Activated CD4-positive, alpha-beta memory T cell treated with anti-CD3 and anti-CD28 coated beads for 36 hours (primary cell): ENCODE measurements at regions of chr9 and their contacts with region 1.

Region 1: GRCh38 chr9:5628530-5629311 is at the start of gene RIC1:
- DNase-seq: peak; percentile 94
- H3K4me3 Mint-ChIP-seq: peak within 1 kb of the TSS; percentile 98
- H3K27ac Mint-ChIP-seq: peak within 1 kb of the TSS; percentile 100
- H3K4me1 Mint-ChIP-seq: peaks cover 62% of the 10 kb centered on the region
- H3K27me3 Mint-ChIP-seq: no peaks in the 10 kb centered on the region
- total RNA-seq, gene RIC1: 14.1 to 15.0 TPM

Region 2: GRCh38 chr9:5336688-5337087 is 292.0 kb before region 1 on chr9:
- CTCF ChIA-PET with region 1: no interaction called
- POLR2A ChIA-PET with region 1: no interaction called
- intact Hi-C with region 1: no loop called
- DNase-seq: peak; percentile 41
- H3K4me3 Mint-ChIP-seq: peak overlapping the region; percentile 37
- H3K27ac Mint-ChIP-seq: peak overlapping the region; percentile 69
- H3K4me1 Mint-ChIP-seq: peaks cover 41% of the 10 kb centered on the region
- H3K27me3 Mint-ChIP-seq: no peaks in the 10 kb centered on the region

Region 3: DNA sequence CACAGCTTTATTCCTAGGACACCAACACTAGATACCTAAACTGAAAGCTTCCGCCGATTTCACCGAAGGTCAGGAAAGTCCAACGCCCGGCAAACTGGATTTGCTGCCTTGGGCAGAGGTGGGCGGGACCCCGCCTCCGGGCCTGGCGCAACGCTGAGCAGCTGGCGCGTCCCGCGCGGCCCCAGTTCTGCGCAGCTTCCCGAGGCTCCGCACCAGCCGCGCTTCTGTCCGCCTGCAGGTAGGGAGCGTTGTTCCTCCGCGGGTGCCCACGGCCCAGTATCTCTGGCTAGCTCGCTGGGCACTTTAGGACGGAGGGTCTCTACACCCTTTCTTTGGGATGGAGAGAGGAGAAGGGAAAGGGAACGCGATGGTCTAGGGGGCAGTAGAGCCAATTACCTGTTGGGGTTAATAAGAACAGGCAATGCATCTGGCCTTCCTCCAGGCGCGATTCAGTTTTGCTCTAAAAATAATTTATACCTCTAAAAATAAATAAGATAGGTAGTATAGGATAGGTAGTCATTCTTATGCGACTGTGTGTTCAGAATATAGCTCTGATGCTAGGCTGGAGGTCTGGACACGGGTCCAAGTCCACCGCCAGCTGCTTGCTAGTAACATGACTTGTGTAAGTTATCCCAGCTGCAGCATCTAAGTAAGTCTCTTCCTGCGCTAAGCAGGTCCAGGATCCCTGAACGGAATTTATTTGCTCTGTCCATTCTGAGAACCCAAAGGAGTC is 178.2 kb before region 1 on chr9 and contains the start of gene CD274:
- CTCF ChIA-PET with region 1: interaction called, 7 read pairs
- POLR2A ChIA-PET with region 1: interaction called, 11 read pairs
- intact Hi-C with region 1: loop called (anchors 2 kb)
- DNase-seq: peak; percentile 92
- H3K4me3 Mint-ChIP-seq: peak within 1 kb of the TSS; percentile 86
- H3K27ac Mint-ChIP-seq: peak within 1 kb of the TSS; percentile 90
- H3K4me1 Mint-ChIP-seq: peaks cover 59% of the 10 kb centered on the region
- H3K27me3 Mint-ChIP-seq: no peaks in the 10 kb centered on the region
- total RNA-seq, gene CD274: 28.3 to 32.4 TPM

Region 4: DNA sequence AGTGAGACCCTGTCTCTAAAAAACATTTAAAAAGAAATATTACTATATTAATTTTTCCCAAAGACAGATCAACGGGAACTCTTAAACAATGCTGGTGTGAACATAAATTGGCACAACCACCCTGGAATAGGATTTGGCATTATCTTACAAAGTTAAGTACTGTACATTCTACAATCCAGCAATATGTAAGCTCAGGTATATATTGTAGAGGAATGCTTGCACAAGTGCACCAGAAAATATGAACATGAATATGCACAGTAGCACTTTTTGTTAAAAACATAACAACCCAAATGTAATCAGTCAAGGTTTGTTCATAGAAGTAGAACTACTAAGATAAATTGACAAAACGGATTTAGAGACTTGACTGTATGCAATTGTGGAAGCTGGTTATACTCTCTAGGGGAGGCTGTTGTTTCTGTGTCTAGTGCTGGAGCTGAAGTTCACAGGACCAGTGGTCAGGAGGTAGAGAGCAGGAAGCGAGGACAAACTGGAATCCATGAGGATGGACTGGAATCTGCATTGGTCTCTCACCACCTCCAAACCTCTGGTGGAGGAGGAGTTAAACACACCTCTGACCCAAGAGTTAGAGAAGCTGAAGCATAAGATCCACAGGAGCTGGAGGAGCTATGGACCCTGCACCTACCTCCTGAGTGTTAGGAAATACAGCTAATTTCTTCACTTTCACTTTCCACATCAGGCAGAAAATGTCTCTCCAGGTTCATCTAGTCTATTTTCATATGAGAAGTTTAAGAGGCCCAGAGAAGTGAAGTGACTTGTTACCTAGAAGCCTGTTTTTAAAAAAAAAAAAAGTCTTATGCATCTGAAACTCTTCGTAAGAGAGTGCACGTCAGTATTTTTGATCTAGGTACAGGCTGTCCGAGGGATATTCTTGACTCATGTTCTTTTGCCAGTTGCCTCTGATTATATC is 20.2 kb before region 1 on chr9:
- CTCF ChIA-PET with region 1: interaction called, 4 read pairs
- POLR2A ChIA-PET with region 1: interaction called, 3 read pairs
- intact Hi-C with region 1: loop called (anchors 2 kb)
- DNase-seq: no peak
- H3K4me3 Mint-ChIP-seq: no peak overlapping the region
- H3K27ac Mint-ChIP-seq: no peak overlapping the region
- H3K4me1 Mint-ChIP-seq: peaks cover 14% of the 10 kb centered on the region
- H3K27me3 Mint-ChIP-seq: no peaks in the 10 kb centered on the region

Region 5: GRCh38 chr9:5714501-5715401 is 86.0 kb after region 1 on chr9:
- CTCF ChIA-PET with region 1: no interaction called
- POLR2A ChIA-PET with region 1: no interaction called
- intact Hi-C with region 1: loop called (anchors 1 kb)
- DNase-seq: no peak
- H3K4me3 Mint-ChIP-seq: no peak overlapping the region
- H3K27ac Mint-ChIP-seq: no peak overlapping the region
- H3K4me1 Mint-ChIP-seq: peaks cover 8% of the 10 kb centered on the region
- H3K27me3 Mint-ChIP-seq: no peaks in the 10 kb centered on the region

Region 6: DNA sequence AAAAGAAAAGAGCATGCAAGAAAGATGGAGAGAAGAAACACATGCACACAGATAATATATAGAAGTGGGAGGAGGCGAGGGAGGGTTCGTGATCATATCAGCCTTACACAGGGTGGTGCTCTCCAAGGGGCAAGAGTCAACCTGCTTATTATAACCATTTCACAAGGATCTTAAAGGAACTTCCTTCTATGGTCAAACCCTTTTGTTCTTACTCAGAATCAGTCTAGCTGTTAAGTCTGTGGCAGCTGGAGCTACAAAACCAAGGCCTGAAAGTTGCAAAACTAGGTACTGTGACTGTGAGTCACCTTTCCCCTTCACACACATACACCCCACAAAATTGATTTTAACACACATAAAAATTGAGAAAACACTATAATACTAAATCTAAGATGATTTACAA is 222.7 kb after region 1 on chr9:
- CTCF ChIA-PET with region 1: no interaction called
- POLR2A ChIA-PET with region 1: interaction called, 3 read pairs
- intact Hi-C with region 1: loop called (anchors 1 kb)
- DNase-seq: peak; percentile 66
- H3K4me3 Mint-ChIP-seq: no peak overlapping the region
- H3K27ac Mint-ChIP-seq: peak overlapping the region; percentile 70
- H3K4me1 Mint-ChIP-seq: peaks cover 46% of the 10 kb centered on the region
- H3K27me3 Mint-ChIP-seq: no peaks in the 10 kb centered on the region